ENCODE measurements at regions of chr6 and their contacts with region 1.

Region 1: DNA sequence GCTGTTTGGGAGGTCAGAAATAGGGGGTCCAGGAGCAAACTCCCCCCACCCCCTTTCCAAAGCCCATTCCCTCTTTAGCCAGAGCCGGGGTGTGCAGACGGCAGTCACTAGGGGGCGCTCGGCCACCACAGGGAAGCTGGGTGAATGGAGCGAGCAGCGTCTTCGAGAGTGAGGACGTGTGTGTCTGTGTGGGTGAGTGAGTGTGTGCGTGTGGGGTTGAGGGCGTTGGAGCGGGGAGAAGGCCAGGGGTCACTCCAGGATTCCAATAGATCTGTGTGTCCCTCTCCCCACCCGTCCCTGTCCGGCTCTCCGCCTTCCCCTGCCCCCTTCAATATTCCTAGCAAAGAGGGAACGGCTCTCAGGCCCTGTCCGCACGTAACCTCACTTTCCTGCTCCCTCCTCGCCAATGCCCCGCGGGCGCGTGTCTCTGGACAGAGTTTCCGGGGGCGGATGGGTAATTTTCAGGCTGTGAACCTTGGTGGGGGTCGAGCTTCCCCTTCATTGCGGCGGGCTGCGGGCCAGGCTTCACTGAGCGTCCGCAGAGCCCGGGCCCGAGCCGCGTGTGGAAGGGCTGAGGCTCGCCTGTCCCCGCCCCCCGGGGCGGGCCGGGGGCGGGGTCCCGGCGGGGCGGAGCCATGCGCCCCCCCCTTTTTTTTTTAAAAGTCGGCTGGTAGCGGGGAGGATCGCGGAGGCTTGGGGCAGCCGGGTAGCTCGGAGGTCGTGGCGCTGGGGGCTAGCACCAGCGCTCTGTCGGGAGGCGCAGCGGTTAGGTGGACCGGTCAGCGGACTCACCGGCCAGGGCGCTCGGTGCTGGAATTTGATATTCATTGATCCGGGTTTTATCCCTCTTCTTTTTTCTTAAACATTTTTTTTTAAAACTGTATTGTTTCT is at the start of gene VEGFA:
- DNase-seq: peak; percentile 94 to 99 (median 98)
- ATAC-seq: peak; percentile 75
- H3K4me3 ChIP-seq: peak within 1 kb of the TSS; percentile 97
- H3K27ac ChIP-seq: peak within 1 kb of the TSS; percentile 91
- H3K4me1 ChIP-seq: peaks cover 18 to 58% of the 10 kb centered on the region in 2 experiments
- H3K27me3 ChIP-seq: no peaks in the 10 kb centered on the region
- CTCF ChIP-seq: peak; percentile 97 to 99 (median 97)
- EP300 ChIP-seq: no peak
- POLR2A ChIP-seq: peak; percentile 91
- RAD21 ChIP-seq: peak; percentile 97 to 99
- polyA plus RNA-seq, gene VEGFA: 14.0 to 16.0 TPM

Region 2: GRCh38 chr6:43328528-43328927 is 441.2 kb before region 1 on chr6:
- CTCF ChIA-PET with region 1: no interaction called
- POLR2A ChIA-PET with region 1: no interaction called
- in situ Hi-C with region 1: no loop called
- intact Hi-C with region 1: no loop called
- DNase-seq: peak in 2 of 4 experiments; percentile 27 to 37
- ATAC-seq: peak; percentile 63; the same call in 2 of the 3 replicates
- H3K4me3 ChIP-seq: no peak overlapping the region
- H3K27ac ChIP-seq: no peak overlapping the region
- H3K4me1 ChIP-seq: no peaks in the 10 kb centered on the region; a peak in 1 of 5 replicates
- H3K27me3 ChIP-seq: peaks cover 4 to 7% of the 10 kb centered on the region in 2 experiments; a peak in 1 of 5 replicates
- CTCF ChIP-seq: no peak
- EP300 ChIP-seq: no peak
- POLR2A ChIP-seq: no peak
- RAD21 ChIP-seq: no peak

Region 3: GRCh38 chr6:43629505-43630300 is 140.1 kb before region 1 on chr6:
- CTCF ChIA-PET with region 1: interaction called, 4 read pairs
- POLR2A ChIA-PET with region 1: interaction called, 15 read pairs
- in situ Hi-C with region 1: no loop called
- intact Hi-C with region 1: no loop called
- DNase-seq: peak; percentile 92 to 99 (median 96)
- ATAC-seq: peak; percentile 75
- H3K4me3 ChIP-seq: peak overlapping the region; percentile 58
- H3K27ac ChIP-seq: peak overlapping the region; percentile 97
- H3K4me1 ChIP-seq: peaks cover 40 to 59% of the 10 kb centered on the region in 2 experiments
- H3K27me3 ChIP-seq: no peaks in the 10 kb centered on the region; a peak in 1 of 5 replicates
- CTCF ChIP-seq: no peak
- EP300 ChIP-seq: peak; percentile 53; the same call in 1 of the 2 replicates
- POLR2A ChIP-seq: peak; percentile 97
- RAD21 ChIP-seq: peak in 1 of 2 experiments; percentile 5; a peak in 2 of 4 replicates

Region 4: GRCh38 chr6:43758617-43759050 is 11.1 kb before region 1 on chr6:
- CTCF ChIA-PET with region 1: no interaction called
- POLR2A ChIA-PET with region 1: interaction called, 12 read pairs
- in situ Hi-C with region 1: no loop called
- intact Hi-C with region 1: no loop called
- DNase-seq: peak; percentile 57 to 79 (median 77)
- ATAC-seq: peak; percentile 91
- H3K4me3 ChIP-seq: no peak overlapping the region
- H3K27ac ChIP-seq: no peak overlapping the region
- H3K4me1 ChIP-seq: peaks cover 6 to 10% of the 10 kb centered on the region in 2 experiments; a peak in 3 of 5 replicates
- H3K27me3 ChIP-seq: peaks cover 10 to 31% of the 10 kb centered on the region in 2 experiments; a peak in 4 of 5 replicates
- CTCF ChIP-seq: peak; percentile 80 to 94 (median 85)
- EP300 ChIP-seq: no peak
- POLR2A ChIP-seq: no peak
- RAD21 ChIP-seq: peak; percentile 73 to 81

Region 5: GRCh38 chr6:43790025-43790523 is 20.3 kb after region 1 on chr6:
- CTCF ChIA-PET with region 1: no interaction called
- POLR2A ChIA-PET with region 1: interaction called, 14 read pairs
- in situ Hi-C with region 1: no loop called
- intact Hi-C with region 1: no loop called
- DNase-seq: peak in 1 of 4 experiments; percentile 18
- ATAC-seq: no peak; the same call in 2 of the 3 replicates
- H3K4me3 ChIP-seq: no peak overlapping the region
- H3K27ac ChIP-seq: no peak overlapping the region
- H3K4me1 ChIP-seq: peaks cover 6 to 14% of the 10 kb centered on the region in 2 experiments; a peak in 3 of 5 replicates
- H3K27me3 ChIP-seq: no peaks in the 10 kb centered on the region
- CTCF ChIP-seq: no peak
- EP300 ChIP-seq: no peak
- POLR2A ChIP-seq: no peak
- RAD21 ChIP-seq: no peak

Region 6: DNA sequence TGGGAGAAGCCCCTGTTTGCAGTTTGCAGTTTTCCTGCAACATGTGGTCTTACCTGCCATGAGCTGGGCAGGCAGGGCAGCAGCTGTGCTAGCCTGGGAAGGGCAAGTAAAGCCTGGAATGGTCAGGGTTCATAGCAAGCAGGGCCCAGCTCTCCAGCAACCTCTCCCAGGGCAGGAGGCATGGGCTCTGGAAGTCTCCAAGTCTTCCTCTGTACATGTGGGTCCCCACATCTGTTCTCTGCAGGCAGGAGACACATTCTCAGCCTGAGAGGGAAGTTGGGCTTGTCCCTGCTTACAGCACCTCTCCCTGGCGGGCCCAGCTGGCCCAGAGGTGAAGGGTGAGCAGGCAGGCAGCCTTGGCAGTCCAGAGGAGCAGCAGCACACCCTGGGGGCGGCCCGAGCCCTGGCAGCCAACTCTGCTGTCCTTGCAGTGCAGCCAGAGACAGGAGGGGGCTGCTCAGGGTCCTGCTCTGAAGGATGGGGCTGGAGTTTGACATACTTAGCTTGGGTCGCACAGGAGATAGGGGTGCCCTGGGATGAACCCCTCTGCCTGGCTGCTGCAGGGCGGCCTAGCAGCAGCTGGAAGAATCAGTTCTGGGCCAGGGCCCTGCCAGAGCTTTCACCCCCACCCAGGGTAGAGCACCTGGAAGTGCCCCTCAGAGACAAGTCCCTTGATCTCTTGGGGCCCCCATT is 181.4 kb after region 1 on chr6:
- CTCF ChIA-PET with region 1: interaction called, 7 read pairs
- POLR2A ChIA-PET with region 1: interaction called, 9 read pairs
- in situ Hi-C with region 1: loop called (anchors 5 kb)
- intact Hi-C with region 1: loop called (anchors 1 kb)
- DNase-seq: peak; percentile 63 to 78 (median 73)
- ATAC-seq: peak; percentile 85
- H3K4me3 ChIP-seq: no peak overlapping the region
- H3K27ac ChIP-seq: peak overlapping the region; percentile 37; the same call in 2 of the 3 replicates
- H3K4me1 ChIP-seq: peaks cover 29 to 61% of the 10 kb centered on the region in 2 experiments
- H3K27me3 ChIP-seq: no peaks in the 10 kb centered on the region
- CTCF ChIP-seq: peak; percentile 85 to 98 (median 97)
- EP300 ChIP-seq: no peak; the same call in 1 of the 2 replicates
- POLR2A ChIP-seq: no peak
- RAD21 ChIP-seq: peak; percentile 96 to 99

Region 7: DNA sequence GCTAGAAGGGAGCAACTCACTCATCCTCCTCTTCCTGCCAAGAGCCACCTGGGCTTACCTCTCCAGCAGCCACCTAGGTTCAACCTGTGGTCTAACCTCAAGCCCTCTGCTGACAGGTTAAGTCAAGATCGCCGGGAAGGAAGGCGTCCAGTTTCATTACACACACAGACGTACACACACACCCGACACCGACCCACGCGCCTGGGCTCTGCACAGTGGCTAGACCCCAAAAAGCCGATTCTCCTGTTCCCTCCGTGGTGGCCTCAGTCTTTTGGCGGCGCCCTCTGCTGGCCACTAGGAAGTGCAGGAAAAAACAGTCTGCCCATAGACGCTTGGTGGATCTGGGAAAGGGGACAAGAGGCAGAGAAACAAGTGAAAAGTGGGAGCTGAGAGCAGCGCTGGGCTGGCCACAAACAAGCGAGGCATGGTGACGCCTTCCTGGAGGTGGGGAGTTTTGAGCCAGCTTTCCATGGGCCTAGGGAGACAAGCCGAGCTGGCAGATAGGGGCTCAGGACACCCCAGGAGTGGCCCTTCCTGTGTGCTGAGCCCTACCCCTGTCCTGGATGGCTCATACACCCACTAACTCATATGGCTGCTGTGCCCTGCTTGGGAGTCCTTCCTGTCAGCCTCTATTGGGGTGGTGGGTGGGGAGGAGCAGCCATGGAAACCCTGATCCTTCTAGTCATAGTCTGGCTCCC is 304.8 kb after region 1 on chr6:
- CTCF ChIA-PET with region 1: interaction called, 60 read pairs
- POLR2A ChIA-PET with region 1: interaction called, 26 read pairs
- in situ Hi-C with region 1: no loop called
- intact Hi-C with region 1: loop called (anchors 1 kb)
- DNase-seq: peak; percentile 80 to 94 (median 84)
- ATAC-seq: peak; percentile 79
- H3K4me3 ChIP-seq: peak overlapping the region; percentile 22; the same call in 1 of the 2 replicates
- H3K27ac ChIP-seq: peak overlapping the region; percentile 80
- H3K4me1 ChIP-seq: peaks cover 53 to 70% of the 10 kb centered on the region in 2 experiments; a peak in 4 of 5 replicates
- H3K27me3 ChIP-seq: no peaks in the 10 kb centered on the region
- CTCF ChIP-seq: peak; percentile 93 to 99 (median 94)
- EP300 ChIP-seq: peak; percentile 36
- POLR2A ChIP-seq: no peak
- RAD21 ChIP-seq: peak; percentile 94 to 95

Measured in K562 (cell line).